ENCODE measurements at regions of chr20 and their contacts with region 1.

Region 1: DNA sequence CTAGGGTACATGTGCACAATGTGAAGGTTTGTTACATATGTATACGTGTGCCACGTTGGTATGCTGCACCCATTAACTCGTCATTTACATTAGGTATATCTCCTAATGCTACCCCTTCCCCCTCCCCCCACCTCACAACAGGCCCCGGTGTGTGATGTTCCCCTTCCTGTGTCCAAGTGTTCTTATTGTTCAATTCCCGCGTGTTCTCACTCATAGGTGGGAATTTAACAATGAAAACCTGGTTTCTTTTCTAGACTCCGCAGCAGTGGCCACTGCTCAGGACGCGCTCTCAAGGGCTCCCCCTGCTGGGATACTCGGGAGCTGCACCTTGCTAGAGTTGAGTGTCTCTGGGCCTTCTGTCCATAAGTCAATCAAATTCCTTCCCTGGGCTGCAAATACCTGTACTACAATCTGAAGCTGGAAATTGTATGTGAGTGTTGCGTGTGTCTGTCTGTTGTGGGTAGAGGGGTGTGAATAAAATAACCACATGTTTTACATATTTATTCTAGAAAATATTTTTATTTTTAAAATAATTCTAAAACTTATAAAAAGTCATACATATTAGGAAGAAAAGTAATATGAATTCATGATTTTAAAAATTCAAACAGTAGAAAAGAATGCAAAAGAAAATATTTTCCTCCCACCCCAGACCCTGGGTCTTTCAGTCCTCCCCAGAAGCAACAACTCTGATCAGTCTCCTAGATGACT is 8.2 kb upstream of the CEP250 start:
- DNase-seq: peak; percentile 83
- CTCF ChIP-seq: peak; percentile 83

Region 2: GRCh38 chr20:34876162-34877001 is 570.9 kb before region 1 on chr20 and contains the start of gene ACSS2:
- in situ Hi-C with region 1: no loop called
- DNase-seq: peak; percentile 93
- CTCF ChIP-seq: no peak

Region 3: DNA sequence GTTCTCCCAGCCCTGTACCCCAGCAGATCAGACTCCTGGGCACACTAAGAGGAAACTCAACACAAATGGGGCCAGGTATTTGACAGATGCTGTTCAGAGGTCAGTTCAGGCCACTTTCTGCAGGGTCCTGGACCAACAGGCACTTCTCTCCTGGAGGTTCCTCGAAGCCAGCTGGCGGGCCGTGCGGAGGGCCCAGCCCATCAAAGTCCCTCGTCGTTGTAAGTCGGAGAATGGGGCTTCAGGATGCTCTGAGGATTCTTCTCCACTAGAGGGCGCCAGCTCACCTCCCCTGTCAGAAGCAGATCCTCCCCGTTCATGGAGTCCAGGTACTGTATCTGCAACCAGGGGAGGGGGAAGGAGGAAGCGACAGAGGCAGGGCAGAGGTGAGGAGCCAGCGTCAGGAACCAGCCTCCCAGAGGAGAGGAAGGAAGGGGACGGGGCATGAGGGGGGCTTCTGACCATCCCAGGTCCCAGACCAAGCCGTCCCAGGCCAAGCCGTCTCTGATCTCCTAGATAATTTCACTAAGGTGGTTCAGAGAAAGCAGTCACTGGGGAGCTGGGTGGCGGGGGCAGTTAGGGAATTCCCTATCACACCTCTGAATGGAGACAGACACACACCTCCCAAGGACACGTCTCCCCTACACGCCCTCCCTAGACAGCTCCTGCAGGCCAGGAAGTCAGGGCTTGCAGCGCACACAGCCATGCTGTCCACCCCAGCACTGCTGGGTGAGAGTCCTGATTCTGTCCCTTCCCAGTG is 143.3 kb before region 1 on chr20:
- in situ Hi-C with region 1: loop called (anchors 10 kb)
- DNase-seq: peak; percentile 90
- CTCF ChIP-seq: peak; percentile 92

Region 4: DNA sequence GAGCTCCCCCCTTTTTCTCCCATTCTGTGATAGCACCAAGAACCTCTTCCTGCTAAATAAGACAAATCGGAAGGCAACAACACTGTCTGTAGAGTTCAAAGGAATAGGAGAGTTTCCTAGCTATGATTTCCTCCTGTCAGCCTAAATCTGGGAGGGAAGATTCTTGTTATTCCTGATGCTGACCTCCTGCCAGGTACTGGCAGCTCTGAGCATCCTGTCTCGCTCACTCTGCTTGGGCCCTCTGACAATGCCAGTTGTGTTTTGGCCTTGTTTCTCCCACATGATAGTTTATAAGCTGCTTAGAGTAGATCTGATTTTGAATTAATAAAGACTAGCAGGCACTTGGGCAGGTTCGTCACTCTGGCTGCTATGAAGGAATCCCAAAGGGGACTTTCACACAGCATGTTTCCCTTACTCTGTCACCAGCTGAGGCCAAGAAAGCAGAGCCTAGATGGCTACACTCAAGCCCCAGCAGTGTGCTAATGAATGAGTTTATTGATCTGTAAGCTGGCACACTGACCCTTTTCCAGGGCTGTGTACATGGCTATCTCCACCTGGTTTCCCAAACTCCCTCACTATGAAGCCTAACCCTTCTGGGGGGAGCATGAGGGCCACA is 87.8 kb before region 1 on chr20:
- in situ Hi-C with region 1: no loop called
- DNase-seq: no peak
- CTCF ChIP-seq: no peak

Measured in GM13976 (cell line).